HEK293 (cell line): ENCODE measurements at regions of chr3 and their contacts with region 1.

Region 1: DNA sequence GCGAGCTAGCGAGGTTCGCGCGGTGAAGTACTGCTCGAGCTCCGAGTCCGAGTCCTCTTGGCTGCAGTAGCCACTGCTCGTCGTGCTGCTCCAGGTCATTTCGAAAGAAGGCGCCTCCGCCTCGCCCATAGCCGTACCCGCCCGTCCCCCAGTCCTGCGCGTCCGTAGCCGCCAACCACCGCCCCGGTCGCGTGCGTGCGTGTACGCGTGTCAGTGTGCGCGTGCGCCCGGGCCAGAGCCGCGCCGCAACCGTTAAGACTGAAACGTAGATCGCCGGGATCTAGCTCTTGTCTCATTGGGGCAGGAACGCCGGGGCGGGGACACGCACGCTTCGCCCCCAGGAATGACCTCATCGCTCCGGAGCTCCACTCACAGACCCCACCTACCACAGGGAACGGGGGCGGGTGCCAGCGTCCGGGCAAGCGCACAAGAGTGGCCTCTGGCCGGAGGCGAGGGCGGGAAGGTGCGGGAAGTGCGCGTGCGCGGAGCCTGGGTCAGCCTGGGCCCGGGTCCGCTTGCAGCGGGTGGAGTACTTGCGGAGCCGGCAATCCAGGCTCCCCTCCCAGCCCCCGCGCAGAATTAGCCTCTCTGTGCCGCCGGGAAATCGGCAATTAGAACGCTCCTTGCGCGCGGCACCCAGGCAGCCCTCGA is 3.3 kb downstream of the RASSF1 start:
- H3K4me3 ChIP-seq: peak overlapping the region; percentile 96
- H3K27ac ChIP-seq: peak overlapping the region; percentile 88
- H3K4me1 ChIP-seq: no peaks in the 10 kb centered on the region; the same call in 1 of the 2 replicates
- CTCF ChIP-seq: no peak

Region 2: DNA sequence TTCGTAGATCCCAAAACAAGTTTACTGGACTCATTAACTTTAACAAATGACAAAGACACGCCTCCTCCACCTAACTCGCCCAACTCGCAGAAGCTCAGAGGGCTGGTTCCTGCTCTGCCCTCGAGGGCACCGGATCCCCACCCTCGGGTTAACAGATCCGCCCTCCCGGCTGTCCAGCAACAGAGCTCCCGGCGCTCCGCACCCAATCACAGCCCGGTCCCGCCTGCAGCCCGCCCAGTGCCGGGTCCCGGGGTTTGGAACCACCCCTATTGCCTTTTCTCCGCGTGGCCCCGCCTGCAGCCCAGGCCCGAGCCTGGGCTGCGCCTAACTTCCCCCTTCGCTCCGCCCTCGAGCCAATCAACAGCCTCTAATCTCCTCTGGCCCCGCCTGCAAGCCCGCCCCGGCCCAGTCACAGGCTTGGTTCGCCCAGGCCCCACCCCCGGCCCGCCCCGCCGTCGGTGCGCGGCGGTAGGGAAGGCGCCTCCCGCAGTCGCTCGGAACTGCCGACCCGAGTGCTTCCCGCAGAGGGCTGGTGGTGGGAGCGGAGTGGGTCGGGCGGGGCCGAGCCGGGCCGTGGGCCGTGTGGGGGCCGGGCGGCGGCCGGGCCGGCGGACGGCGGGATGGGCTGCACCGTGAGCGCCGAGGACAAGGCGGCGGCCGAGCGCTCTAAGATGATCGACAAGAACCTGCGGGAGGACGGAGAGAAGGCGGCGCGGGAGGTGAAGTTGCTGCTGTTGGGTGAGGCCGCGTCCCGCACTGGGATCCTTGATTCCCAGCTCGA is 101.4 kb before region 1 on chr3 and contains the start of gene GNAI2:
- CTCF ChIA-PET with region 1: no interaction called
- POLR2A ChIA-PET with region 1: interaction called, 17 read pairs
- H3K4me3 ChIP-seq: peak within 1 kb of the TSS; percentile 67
- H3K27ac ChIP-seq: peak within 1 kb of the TSS; percentile 77
- H3K4me1 ChIP-seq: peaks cover 14% of the 10 kb centered on the region
- CTCF ChIP-seq: no peak

Region 3: GRCh38 chr3:50292159-50293078 is 44.9 kb before region 1 on chr3 and contains the start of gene IFRD2:
- CTCF ChIA-PET with region 1: no interaction called
- POLR2A ChIA-PET with region 1: interaction called, 18 read pairs
- H3K4me3 ChIP-seq: peak within 1 kb of the TSS; percentile 80
- H3K27ac ChIP-seq: peak within 1 kb of the TSS; percentile 77
- H3K4me1 ChIP-seq: no peaks in the 10 kb centered on the region
- CTCF ChIP-seq: no peak

Region 4: GRCh38 chr3:50298836-50299637 is 38.3 kb before region 1 on chr3 and contains the starts of genes HYAL3 and NAA80:
- CTCF ChIA-PET with region 1: no interaction called
- POLR2A ChIA-PET with region 1: interaction called, 34 read pairs
- H3K4me3 ChIP-seq: peak within 1 kb of the TSS; percentile 69
- H3K27ac ChIP-seq: peak within 1 kb of the TSS; percentile 56
- H3K4me1 ChIP-seq: no peaks in the 10 kb centered on the region
- CTCF ChIP-seq: peak; percentile 85; the same call in 1 of the 2 replicates

Region 5: GRCh38 chr3:50321336-50322114 is 15.8 kb before region 1 on chr3:
- CTCF ChIA-PET with region 1: interaction called, 13 read pairs
- POLR2A ChIA-PET with region 1: interaction called, 17 read pairs
- H3K4me3 ChIP-seq: peak overlapping the region; percentile 62
- H3K27ac ChIP-seq: peak overlapping the region; percentile 95
- H3K4me1 ChIP-seq: peaks cover 7% of the 10 kb centered on the region; the same call in 1 of the 2 replicates
- CTCF ChIP-seq: peak; percentile 65

Region 6: GRCh38 chr3:50350527-50351322 is 13.4 kb after region 1 on chr3 and contains the starts of genes CYB561D2 and NPRL2:
- CTCF ChIA-PET with region 1: interaction called, 3 read pairs
- POLR2A ChIA-PET with region 1: interaction called, 51 read pairs
- H3K4me3 ChIP-seq: peak within 1 kb of the TSS; percentile 72
- H3K27ac ChIP-seq: peak within 1 kb of the TSS; percentile 63
- H3K4me1 ChIP-seq: peaks cover 4% of the 10 kb centered on the region; the same call in 1 of the 2 replicates
- CTCF ChIP-seq: no peak

Region 7: GRCh38 chr3:50356553-50356952 is 19.2 kb after region 1 on chr3:
- CTCF ChIA-PET with region 1: no interaction called
- POLR2A ChIA-PET with region 1: interaction called, 51 read pairs
- H3K4me3 ChIP-seq: peak overlapping the region; percentile 82
- H3K27ac ChIP-seq: no peak overlapping the region
- H3K4me1 ChIP-seq: no peaks in the 10 kb centered on the region
- CTCF ChIP-seq: no peak